HEK293 (cell line): ENCODE measurements at regions of chr15 and their contacts with region 1.

Region 1: GRCh38 chr15:80776420-80777045 is 2.6 kb upstream of the CEMIP start:
- H3K4me3 ChIP-seq: no peak overlapping the region
- H3K27ac ChIP-seq: no peak overlapping the region
- H3K4me1 ChIP-seq: peaks cover 28% of the 10 kb centered on the region
- CTCF ChIP-seq: peak; percentile 58; the same call in 1 of the 2 replicates

Region 2: DNA sequence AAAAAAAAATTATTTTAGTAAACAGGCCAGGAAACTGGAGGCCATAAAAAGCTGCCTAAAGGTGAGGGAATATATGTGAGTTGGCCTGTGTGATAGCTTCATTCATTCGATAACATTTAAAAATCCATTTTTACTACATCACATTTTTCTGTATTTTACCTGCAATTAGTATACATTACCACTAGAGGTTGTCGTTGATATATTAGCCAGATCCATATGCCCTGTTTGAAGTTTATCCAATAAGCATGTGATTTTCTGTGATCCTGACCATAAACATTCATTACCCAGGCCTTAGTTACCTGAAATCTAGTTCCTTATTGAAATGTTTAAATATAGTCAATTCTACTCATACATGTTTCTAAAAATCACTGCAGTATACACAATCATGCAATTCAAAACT is 301.0 kb before region 1 on chr15:
- CTCF ChIA-PET with region 1: interaction called, 12 read pairs
- POLR2A ChIA-PET with region 1: no interaction called
- H3K4me3 ChIP-seq: no peak overlapping the region
- H3K27ac ChIP-seq: no peak overlapping the region
- H3K4me1 ChIP-seq: no peaks in the 10 kb centered on the region
- CTCF ChIP-seq: no peak

Region 3: GRCh38 chr15:80654299-80654698 is 122.2 kb before region 1 on chr15:
- CTCF ChIA-PET with region 1: interaction called, 84 read pairs
- POLR2A ChIA-PET with region 1: no interaction called
- H3K4me3 ChIP-seq: no peak overlapping the region
- H3K27ac ChIP-seq: no peak overlapping the region
- H3K4me1 ChIP-seq: no peaks in the 10 kb centered on the region
- CTCF ChIP-seq: no peak

Region 4: GRCh38 chr15:80679167-80680131 is 97.1 kb before region 1 on chr15:
- CTCF ChIA-PET with region 1: interaction called, 18 read pairs
- POLR2A ChIA-PET with region 1: no interaction called
- H3K4me3 ChIP-seq: no peak overlapping the region
- H3K27ac ChIP-seq: no peak overlapping the region
- H3K4me1 ChIP-seq: no peaks in the 10 kb centered on the region
- CTCF ChIP-seq: no peak

Region 5: GRCh38 chr15:80752174-80752573 is 24.4 kb before region 1 on chr15:
- CTCF ChIA-PET with region 1: interaction called, 17 read pairs
- POLR2A ChIA-PET with region 1: no interaction called
- H3K4me3 ChIP-seq: no peak overlapping the region
- H3K27ac ChIP-seq: no peak overlapping the region
- H3K4me1 ChIP-seq: peaks cover 3% of the 10 kb centered on the region
- CTCF ChIP-seq: no peak

Region 6: DNA sequence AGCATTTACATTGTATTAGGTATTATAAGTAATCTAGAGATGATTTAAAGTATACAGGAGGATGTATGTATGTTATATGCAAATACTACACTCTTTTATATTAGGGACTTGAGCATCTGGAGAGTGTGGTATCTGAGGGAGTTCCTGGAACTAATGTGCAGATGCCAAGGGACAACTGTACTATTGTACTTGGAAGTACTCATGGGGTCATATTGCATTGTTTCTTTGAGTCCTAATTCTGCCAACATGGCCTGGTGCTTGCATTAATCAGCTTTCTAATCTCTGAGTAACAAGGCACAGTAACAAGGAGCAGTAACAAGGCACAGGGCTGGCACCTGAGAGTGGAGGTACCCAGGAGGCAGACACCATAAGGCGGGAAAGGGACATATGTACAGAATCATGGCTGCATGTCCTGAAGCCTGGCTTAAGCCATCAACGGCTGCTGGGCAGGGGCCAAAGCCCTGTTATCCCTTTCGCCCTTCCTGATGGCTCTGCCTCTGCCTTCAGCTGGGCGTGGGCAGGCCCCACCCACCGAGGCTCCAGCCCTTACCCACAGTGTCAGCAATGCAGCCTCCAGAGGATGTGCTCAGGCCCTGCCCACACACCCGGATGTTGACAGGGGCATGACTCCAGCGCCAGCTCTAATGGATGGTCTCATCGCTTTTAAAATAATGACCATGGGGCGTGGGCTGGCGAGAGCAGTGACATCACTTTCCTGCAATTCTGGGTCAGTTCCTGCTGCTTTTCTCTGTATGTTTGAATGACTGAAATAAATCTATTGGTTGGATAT is 25.6 kb after region 1 on chr15:
- CTCF ChIA-PET with region 1: interaction called, 11 read pairs
- POLR2A ChIA-PET with region 1: no interaction called
- H3K4me3 ChIP-seq: no peak overlapping the region
- H3K27ac ChIP-seq: no peak overlapping the region
- H3K4me1 ChIP-seq: peaks cover 5% of the 10 kb centered on the region
- CTCF ChIP-seq: no peak

Region 7: GRCh38 chr15:81133782-81134461 is 357.4 kb after region 1 on chr15 and contains the start of gene CFAP161:
- CTCF ChIA-PET with region 1: no interaction called
- POLR2A ChIA-PET with region 1: no interaction called
- H3K4me3 ChIP-seq: peak within 1 kb of the TSS; percentile 34
- H3K27ac ChIP-seq: no peak within 1 kb of the TSS
- H3K4me1 ChIP-seq: no peaks in the 10 kb centered on the region; the same call in 1 of the 2 replicates
- CTCF ChIP-seq: peak; percentile 23; the same call in 1 of the 2 replicates